ENCODE measurements at regions of chr16 and their contacts with region 1.

Region 1: DNA sequence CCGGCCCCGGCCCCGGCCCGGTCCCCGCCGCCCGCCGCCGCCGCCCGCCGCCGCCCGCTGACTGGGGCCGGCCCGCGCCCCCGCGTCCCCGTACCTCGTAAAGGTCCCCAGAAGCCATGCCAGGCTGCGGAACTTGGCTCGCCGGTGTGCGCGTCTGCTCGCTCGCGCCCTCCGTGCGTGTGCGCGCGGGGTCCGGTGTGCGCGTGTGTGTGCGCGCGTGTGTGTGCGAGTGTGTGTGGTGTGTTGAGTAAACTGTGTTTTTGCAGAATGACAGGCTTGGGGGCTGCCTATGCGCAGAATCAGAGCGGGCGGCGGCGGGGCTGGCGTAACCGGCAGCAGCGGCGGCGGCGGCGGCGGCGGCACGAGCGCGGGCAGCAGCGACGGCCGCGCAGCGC is 345 bp downstream of the CDYL2 start:
- DNase-seq: peak; percentile 36 to 80 (median 59)
- ATAC-seq: peak; percentile 58
- H3K4me3 ChIP-seq: peak overlapping the region; percentile 57
- H3K4me3 Mint-ChIP-seq: peak overlapping the region; percentile 96
- H3K27ac ChIP-seq: no peak overlapping the region
- H3K27ac Mint-ChIP-seq: peak overlapping the region; percentile 71
- H3K4me1 ChIP-seq: peaks cover 20% of the 10 kb centered on the region
- H3K4me1 Mint-ChIP-seq: peaks cover 16% of the 10 kb centered on the region
- H3K27me3 ChIP-seq: no peaks in the 10 kb centered on the region
- H3K27me3 Mint-ChIP-seq: no peaks in the 10 kb centered on the region
- CTCF ChIP-seq: no peak

Region 2: DNA sequence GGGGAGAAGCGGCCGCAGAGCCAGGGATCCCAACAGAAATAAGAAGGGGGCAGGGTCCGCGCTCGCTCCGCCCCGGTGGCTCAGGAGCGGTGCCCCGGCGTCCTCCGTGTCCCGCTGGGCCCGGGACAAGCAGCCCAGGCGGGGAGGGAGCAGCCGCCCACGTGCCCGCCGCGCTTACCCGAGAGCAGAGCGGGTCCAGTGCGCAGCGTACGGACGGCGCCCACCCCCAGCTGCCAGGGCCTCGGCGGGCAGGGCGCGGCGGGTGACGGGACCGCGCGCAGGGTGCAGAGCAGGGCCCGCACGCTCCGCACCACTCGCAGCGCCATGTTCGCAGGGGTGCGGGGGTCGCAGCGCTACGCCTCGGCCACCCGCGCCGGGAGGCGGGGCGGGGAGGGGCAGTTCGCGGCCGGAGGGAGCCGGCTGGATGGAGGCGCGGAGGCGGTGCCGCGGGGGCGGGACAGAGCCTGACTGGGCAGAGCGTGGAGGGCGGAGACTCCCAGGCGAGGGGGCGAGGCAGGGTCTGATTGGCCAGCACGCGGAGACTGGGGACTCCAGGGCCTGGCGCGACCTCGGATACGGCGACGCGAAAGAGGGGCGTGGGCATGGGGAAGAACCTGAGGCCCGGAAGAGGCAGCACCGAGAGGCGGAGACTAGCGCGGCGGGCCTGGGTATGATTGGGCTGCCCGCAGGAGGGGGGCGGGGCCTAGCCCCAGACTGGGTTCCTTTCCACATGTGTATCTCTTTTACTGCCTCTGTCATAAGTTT is 292.1 kb after region 1 on chr16 and contains the start of gene GCSH:
- CTCF ChIA-PET with region 1: no interaction called
- POLR2A ChIA-PET with region 1: no interaction called
- intact Hi-C with region 1: loop called in 1 of 2 experiments (anchors 10 kb)
- DNase-seq: peak; percentile 95 to 100 (median 98)
- ATAC-seq: peak; percentile 96
- H3K4me3 ChIP-seq: peak within 1 kb of the TSS; percentile 74
- H3K4me3 Mint-ChIP-seq: peak within 1 kb of the TSS; percentile 96
- H3K27ac ChIP-seq: peak within 1 kb of the TSS in 1 of 2 donors; percentile 16
- H3K27ac Mint-ChIP-seq: peak within 1 kb of the TSS; percentile 77
- H3K4me1 ChIP-seq: peaks cover 17% of the 10 kb centered on the region
- H3K4me1 Mint-ChIP-seq: peaks cover 17% of the 10 kb centered on the region
- H3K27me3 ChIP-seq: no peaks in the 10 kb centered on the region
- H3K27me3 Mint-ChIP-seq: no peaks in the 10 kb centered on the region
- CTCF ChIP-seq: no peak
- total RNA-seq, gene GCSH: 2.3 to 3.2 TPM